A673 (cell line): ENCODE measurements at regions of chr3 and their contacts with region 1.

Region 1: GRCh38 chr3:181417748-181418147 is 294.0 kb upstream of the SOX2 start:
- DNase-seq: no peak
- H3K4me3 ChIP-seq: no peak overlapping the region
- H3K27ac ChIP-seq: no peak overlapping the region
- H3K4me1 ChIP-seq: no peaks in the 10 kb centered on the region
- H3K27me3 ChIP-seq: no peaks in the 10 kb centered on the region
- CTCF ChIP-seq: no peak

Region 2: GRCh38 chr3:180531303-180532278 is 886.2 kb before region 1 on chr3:
- CTCF ChIA-PET with region 1: no interaction called
- POLR2A ChIA-PET with region 1: no interaction called
- intact Hi-C with region 1: no loop called
- DNase-seq: no peak
- H3K4me3 ChIP-seq: no peak overlapping the region
- H3K27ac ChIP-seq: no peak overlapping the region
- H3K4me1 ChIP-seq: no peaks in the 10 kb centered on the region
- H3K27me3 ChIP-seq: peaks cover 10% of the 10 kb centered on the region
- CTCF ChIP-seq: no peak

Region 3: GRCh38 chr3:181403876-181404660 is 13.7 kb before region 1 on chr3:
- CTCF ChIA-PET with region 1: no interaction called
- POLR2A ChIA-PET with region 1: no interaction called
- intact Hi-C with region 1: loop called (anchors 2 kb)
- DNase-seq: no peak
- H3K4me3 ChIP-seq: no peak overlapping the region
- H3K27ac ChIP-seq: no peak overlapping the region
- H3K4me1 ChIP-seq: no peaks in the 10 kb centered on the region
- H3K27me3 ChIP-seq: no peaks in the 10 kb centered on the region
- CTCF ChIP-seq: no peak

Region 4: DNA sequence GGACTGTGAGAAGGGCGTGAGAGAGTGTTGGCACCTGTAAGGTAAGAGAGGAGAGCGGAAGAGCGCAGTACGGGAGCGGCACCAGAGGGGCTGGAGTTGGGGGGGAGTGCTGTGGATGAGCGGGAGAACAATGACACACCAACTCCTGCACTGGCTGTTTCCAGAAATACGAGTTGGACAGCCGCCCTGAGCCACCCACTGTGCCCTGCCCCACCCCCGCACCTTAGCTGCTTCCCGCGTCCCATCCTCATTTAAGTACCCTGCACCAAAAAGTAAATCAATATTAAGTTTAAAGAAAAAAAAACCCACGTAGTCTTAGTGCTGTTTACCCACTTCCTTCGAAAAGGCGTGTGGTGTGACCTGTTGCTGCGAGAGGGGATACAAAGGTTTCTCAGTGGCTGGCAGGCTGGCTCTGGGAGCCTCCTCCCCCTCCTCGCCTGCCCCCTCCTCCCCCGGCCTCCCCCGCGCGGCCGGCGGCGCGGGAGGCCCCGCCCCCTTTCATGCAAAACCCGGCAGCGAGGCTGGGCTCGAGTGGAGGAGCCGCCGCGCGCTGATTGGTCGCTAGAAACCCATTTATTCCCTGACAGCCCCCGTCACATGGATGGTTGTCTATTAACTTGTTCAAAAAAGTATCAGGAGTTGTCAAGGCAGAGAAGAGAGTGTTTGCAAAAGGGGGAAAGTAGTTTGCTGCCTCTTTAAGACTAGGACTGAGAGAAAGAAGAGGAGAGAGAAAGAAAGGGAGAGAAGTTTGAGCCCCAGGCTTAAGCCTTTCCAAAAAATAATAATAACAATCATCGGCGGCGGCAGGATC is 293.8 kb after region 1 on chr3 and contains the start of gene SOX2:
- CTCF ChIA-PET with region 1: no interaction called
- POLR2A ChIA-PET with region 1: no interaction called
- intact Hi-C with region 1: no loop called
- DNase-seq: peak; percentile 98
- H3K4me3 ChIP-seq: peak within 1 kb of the TSS; percentile 78
- H3K27ac ChIP-seq: peak within 1 kb of the TSS; percentile 86
- H3K4me1 ChIP-seq: peaks cover 43% of the 10 kb centered on the region
- H3K27me3 ChIP-seq: no peaks in the 10 kb centered on the region
- CTCF ChIP-seq: no peak
- total RNA-seq, gene SOX2: 62.0 and 64.3 TPM in 2 replicates